ENCODE measurements at regions of chr9 and their contacts with region 1.

Region 1: GRCh38 chr9:121121582-121122087 is 46.9 kb downstream of the CNTRL start:
- DNase-seq: peak; percentile 99

Region 2: DNA sequence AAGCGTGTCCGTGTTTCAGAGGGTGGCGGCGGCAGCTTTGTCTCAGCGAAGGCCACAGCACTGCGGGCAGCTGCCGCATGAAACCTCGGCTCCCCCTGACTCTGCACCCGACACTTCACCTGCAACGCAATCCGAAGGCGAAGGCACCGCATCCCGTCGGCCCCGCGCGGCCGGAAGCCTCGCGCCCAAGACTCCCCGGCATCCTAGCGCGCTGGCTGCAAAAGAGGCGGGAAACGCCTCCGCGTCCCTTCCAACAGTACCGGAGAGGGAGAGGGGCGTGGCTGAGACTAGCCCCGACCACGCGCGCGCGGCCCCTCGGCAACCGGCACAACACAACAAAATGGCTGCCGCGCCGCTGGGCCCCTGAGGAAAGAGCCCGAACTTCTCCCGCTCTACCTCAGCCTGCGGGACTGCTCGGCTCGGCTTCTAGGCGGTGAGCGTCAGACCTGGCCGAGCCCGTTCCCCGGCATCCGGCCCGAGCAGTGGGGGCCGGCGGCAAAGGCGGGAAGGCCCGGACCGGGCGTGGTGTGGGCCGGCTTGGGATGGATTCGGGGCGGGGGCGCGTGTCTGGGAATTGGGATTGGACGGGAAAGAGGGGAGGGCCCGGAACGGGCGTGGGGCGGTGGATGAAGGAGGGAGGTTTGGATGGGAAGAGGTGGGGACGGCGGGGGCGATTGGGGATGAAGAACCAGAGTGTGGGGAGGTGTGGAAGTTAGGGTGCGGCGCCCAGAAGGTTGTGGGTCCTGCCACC is 46.8 kb before region 1 on chr9 and contains the start of gene CNTRL:
- intact Hi-C with region 1: loop called (anchors 2 kb)
- DNase-seq: peak; percentile 94
- total RNA-seq, gene CNTRL: 4.2 TPM

Measured in cardiac septum (tissue), 1 donor.